Left ventricle myocardium superior (tissue), 1 donor: ENCODE measurements at regions of chr19 and their contacts with region 1.

Region 1: GRCh38 chr19:11035441-11036377 is 53.6 kb upstream of the LDLR start:
- DNase-seq: peak; percentile 95
- ATAC-seq: peak; percentile 94

Region 2: GRCh38 chr19:11125994-11126685 is 90.4 kb after region 1 on chr19:
- intact Hi-C with region 1: loop called (anchors 5 kb)
- DNase-seq: peak; percentile 88
- ATAC-seq: peak; percentile 79